OCI-LY7 (cell line): ENCODE measurements at regions of chr2 and their contacts with region 1.

Region 1: DNA sequence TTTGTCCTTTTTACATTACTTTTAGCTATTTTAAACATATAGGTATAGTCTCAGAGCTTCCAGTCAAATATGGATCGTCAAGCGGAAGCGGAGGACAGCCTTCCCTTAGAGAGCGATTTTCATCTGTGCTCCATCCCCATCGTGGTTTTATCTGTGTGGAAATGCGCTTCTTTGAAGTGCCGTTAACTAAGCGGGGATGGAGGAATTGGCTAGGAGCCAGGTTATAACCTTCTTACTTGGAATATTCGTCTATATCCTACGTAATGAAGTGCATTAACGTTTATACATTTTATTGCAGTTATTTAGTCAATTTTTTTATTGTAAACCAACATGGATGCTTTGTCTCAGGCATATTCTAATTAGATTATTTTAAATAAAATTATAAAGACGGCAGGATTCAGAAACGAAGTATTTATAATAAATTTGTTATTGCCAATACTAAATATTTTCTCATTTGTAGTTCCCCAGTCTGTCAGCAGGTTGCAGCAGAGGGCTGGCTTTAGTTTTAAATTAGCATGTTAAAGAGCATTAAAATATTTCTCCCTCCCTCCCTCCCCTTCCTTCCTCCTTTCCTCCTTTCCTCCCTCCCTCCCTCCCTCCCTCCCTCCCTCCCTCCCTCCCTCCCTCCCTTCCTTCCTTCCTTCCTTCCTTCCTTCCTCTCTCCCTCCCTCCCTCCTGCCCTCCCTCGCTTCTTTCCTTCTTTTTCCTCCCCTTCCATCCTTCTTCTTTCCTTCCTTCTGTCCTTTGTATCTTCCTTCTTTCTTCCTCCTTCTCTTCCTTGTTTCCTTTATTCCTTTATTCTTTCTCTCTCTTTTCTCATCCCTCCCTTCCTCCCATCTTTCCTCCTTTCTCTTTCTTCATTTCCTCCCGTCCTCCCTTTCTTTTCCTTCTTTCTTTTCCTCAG is 80.6 kb upstream of the DOCK10 start:
- DNase-seq: peak; percentile 44
- H3K4me3 ChIP-seq: no peak overlapping the region
- H3K27ac ChIP-seq: no peak overlapping the region
- H3K4me1 ChIP-seq: no peaks in the 10 kb centered on the region
- CTCF ChIP-seq: peak; percentile 74

Region 2: DNA sequence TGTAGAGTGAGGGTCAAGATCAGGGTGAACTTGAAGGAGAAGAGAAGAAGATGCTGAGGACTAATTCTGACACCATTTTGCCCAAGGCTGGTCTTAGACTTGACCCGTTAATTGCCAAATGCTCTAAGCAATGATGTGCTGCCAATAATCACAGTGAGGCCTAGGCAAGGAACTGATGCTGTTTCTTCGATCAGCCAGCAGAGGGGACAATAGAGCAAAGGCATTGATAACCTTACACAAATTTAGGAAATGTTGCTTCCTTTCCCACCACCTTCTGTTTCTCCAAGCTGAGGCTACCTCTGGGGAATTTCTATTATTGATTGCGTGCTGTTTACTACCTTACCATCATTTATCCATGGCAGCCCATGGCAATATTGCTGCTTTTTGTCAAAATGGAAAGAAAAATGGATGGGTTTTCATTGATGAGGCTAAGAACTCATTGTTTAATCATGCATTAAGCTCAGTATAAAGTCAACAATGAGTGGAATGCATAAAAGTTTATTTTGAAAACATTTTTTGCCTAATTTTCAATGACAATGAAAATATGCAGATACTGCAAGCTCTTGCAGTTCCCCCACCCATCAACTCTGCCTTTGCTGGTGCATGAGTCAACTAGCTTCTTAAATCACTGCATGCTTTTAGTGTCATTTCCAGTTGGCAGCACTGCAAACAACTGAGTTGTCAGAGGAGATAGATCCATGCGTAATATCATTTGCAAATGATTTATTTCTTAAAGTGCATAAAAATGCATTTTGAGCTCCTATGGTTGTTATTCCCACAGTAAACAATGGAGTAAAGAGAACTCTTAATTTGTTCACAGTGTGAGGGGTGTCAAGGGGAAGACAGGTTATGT is 160.2 kb after region 1 on chr2:
- CTCF ChIA-PET with region 1: no interaction called
- POLR2A ChIA-PET with region 1: interaction called, 3 read pairs
- intact Hi-C with region 1: loop called (anchors 10 kb)
- DNase-seq: peak; percentile 41
- H3K4me3 ChIP-seq: no peak overlapping the region
- H3K27ac ChIP-seq: no peak overlapping the region
- H3K4me1 ChIP-seq: peaks cover 13% of the 10 kb centered on the region
- CTCF ChIP-seq: peak; percentile 83

Region 3: DNA sequence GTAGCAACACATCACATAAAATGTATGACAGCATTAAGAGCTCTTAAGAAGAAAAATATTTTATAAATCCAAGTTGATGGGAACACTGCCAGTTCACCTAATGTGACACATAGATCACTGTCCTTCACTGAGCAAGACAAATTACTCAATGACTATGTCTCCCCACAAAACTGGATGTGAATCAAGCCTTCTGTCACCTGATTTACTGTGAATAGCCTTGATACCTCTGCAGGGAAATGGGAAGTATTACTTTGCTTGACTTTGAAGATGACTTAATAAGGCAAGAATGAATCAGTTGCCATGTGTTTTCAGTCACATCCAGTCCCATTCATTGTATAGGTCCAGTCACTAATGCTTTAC is 371.2 kb after region 1 on chr2:
- CTCF ChIA-PET with region 1: no interaction called
- POLR2A ChIA-PET with region 1: no interaction called
- intact Hi-C with region 1: loop called (anchors 10 kb)
- DNase-seq: no peak
- H3K4me3 ChIP-seq: no peak overlapping the region
- H3K27ac ChIP-seq: no peak overlapping the region
- H3K4me1 ChIP-seq: no peaks in the 10 kb centered on the region
- CTCF ChIP-seq: no peak